Heart right ventricle (tissue), 16 donors: ENCODE measurements at regions of chr1 and their contacts with region 1.

Region 1: DNA sequence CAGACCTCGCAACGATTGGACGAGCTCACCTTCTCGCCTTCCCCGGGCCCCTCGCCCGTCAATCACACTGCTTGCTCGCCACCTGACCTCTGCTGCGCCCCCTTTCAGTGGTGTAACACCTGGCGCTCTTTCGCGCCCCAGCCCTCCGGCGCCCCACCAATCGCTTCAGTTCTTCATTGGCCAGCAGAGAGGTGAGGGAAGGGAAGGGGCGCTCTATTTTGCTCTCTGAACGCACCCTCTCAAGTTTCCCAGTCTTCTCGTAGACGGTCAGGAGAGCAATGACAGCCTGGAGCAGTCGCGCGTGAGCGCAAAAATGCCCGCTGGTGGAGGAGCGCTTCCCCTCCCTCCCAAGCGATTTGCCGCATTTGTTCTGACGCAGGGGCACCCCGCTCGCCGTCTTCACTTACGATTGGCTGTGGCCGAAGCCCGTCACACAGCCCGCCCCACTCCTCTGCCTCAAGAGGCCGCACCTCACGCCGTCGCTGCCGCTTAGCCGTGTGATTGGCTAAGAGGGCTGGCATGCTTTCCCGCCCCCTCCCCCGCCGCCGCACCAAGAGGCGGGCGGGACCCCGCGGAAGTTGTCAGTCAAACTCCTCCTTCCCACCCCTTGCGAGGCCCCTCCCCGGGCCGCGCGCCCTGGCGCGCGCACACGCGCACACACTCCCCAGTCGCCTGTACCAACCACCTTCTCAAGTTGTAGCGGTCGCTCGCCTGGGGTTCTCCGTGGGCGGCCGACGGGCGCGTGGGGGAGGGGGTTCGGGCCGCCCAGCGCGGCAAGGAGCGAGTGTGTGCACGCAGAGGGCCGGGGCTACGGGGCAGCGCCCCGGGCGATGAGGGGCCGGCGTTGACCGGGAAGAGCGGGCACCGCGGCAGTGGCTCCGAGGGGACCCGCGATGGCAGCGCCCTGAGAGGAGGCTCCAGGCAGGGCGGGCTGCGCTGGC is at the start of gene PPP2R5A:
- DNase-seq: peak; percentile 99
- ATAC-seq: peak; percentile 95 to 98 (median 98)
- H3K4me3 ChIP-seq: peak within 1 kb of the TSS; percentile 75 to 95 (median 91)
- H3K27ac ChIP-seq: peak within 1 kb of the TSS; percentile 96 to 99 (median 98)
- H3K4me1 ChIP-seq: peaks cover 0 to 46% (median 32%) of the 10 kb centered on the region in 9 donors
- H3K27me3 ChIP-seq: no peaks in the 10 kb centered on the region
- CTCF ChIP-seq: peak in 7 of 9 donors; percentile 6 to 52 (median 33)
- total RNA-seq, gene PPP2R5A: 48.6 to 86.8 (median 57.3) TPM

Region 2: DNA sequence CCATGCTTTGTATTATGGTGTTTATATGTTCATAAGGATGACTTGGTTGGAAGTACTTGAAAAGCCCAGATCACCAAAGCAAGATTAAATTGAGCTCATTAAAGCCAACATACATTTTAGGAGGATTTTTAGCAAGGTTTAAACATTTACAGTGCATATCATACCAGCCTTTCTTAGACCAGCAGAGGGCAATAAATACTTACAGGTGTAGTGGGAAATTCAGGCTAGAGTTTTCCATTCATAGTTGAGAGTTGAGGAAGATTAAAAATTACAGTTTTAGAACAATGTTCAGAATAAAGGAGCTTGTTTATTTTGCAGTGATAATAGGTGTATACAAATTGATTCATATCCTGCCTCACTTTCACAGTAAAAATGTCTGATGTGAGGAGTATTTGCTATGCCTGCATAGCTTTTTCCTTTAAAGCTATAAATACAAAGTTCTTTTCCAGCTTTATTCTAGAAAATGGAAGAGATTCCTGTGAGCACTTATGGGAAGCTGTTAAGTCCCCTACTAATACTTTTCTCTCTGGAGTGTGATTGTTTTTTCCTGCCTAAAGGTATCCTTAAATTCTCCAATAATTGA is 214.2 kb before region 1 on chr1:
- intact Hi-C with region 1: loop called in 5 of 10 experiments (anchors 2 to 5 kb)
- DNase-seq: no peak
- ATAC-seq: peak; percentile 52 to 83 (median 58)
- H3K4me3 ChIP-seq: no peak overlapping the region
- H3K27ac ChIP-seq: peak overlapping the region in 2 of 10 donors; percentile 0 to 58
- H3K4me1 ChIP-seq: peaks cover 0 to 39% (median 9%) of the 10 kb centered on the region in 9 donors
- H3K27me3 ChIP-seq: no peaks in the 10 kb centered on the region
- CTCF ChIP-seq: peak; percentile 66 to 91 (median 81)

Region 3: DNA sequence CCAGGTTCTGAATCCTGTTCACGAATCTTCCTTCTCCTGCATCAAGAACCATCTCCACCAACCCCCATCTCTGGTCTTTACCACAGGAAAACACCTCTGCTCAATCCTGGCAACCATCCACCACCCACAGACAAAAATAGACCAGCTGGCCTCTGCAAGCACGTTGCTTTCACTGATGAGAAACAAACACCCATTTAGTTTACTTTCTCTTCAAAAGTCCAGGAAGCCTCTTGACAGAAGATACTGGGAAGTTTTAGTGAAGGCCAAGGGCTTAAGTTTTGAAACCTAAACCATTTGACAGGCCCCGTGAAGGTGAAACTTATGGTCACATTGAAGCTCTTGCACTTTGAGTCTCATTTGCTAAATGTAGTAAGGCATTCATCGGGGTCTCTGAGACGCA is 122.4 kb before region 1 on chr1:
- intact Hi-C with region 1: loop called in 3 of 10 experiments (anchors 1 to 10 kb)
- DNase-seq: peak; percentile 31 to 76
- ATAC-seq: peak; percentile 32 to 69 (median 57)
- H3K4me3 ChIP-seq: no peak overlapping the region
- H3K27ac ChIP-seq: peak overlapping the region in 9 of 10 donors; percentile 3 to 81 (median 42)
- H3K4me1 ChIP-seq: peaks cover 5 to 52% (median 39%) of the 10 kb centered on the region in 9 donors
- H3K27me3 ChIP-seq: no peaks in the 10 kb centered on the region
- CTCF ChIP-seq: no peak

Region 4: DNA sequence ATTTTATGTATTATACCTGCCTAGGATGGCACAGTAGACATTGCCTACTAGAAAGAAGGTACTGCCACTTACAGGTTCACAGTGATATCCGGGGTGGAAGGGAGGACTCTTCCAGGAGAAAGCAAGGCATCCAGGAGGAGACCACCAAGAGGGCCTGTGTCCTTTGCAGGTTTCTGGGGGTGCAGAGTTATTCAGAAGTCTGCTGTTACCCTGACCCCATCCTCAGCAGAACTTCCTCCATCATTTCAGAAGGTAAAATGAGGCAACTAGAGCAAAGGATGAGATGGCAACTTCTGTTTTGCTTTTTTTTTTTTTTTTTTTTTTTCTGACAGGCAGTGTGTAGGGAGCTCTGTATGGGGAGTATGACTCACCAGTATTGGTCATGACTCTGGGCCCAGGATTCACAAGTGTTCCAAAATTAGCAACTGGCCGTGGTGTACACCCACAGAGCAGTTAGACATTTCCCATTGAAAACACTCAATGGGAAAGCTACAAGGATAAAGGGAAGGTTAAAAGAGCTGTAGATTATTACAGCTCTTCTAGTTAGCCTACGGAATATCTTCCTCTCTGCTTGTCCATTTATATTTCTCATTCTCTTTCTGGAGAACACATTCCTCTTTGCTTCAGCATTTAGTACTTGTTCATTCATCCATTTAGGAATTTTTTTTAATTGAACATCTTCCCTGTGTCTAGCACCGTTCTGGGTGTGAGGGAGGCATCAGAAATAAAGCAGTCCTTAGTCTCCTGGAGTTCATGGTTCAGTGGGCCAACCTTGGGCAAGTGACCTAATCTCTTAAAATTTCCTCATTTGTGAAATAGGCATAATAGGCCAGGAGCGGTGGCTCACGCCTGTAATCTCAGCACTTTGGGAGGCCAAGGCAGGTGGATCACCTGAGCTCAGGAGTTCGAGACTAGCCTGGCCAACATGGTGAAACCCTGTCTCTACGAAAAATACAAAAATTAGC is 50.3 kb before region 1 on chr1:
- intact Hi-C with region 1: loop called in 6 of 10 experiments (anchors 2 to 10 kb)
- DNase-seq: peak in 1 of 2 donors; percentile 73
- ATAC-seq: peak; percentile 94 to 98 (median 96)
- H3K4me3 ChIP-seq: no peak overlapping the region
- H3K27ac ChIP-seq: peak overlapping the region; percentile 59 to 90 (median 75)
- H3K4me1 ChIP-seq: peaks cover 4 to 55% (median 39%) of the 10 kb centered on the region in 9 donors
- H3K27me3 ChIP-seq: no peaks in the 10 kb centered on the region
- CTCF ChIP-seq: no peak

Region 5: GRCh38 chr1:212346601-212347000 is 61.6 kb after region 1 on chr1:
- intact Hi-C with region 1: no loop called
- DNase-seq: no peak
- ATAC-seq: no peak
- H3K4me3 ChIP-seq: no peak overlapping the region
- H3K27ac ChIP-seq: no peak overlapping the region
- H3K4me1 ChIP-seq: peaks cover 0 to 6% (median 0%) of the 10 kb centered on the region in 9 donors
- H3K27me3 ChIP-seq: no peaks in the 10 kb centered on the region
- CTCF ChIP-seq: no peak

Region 6: DNA sequence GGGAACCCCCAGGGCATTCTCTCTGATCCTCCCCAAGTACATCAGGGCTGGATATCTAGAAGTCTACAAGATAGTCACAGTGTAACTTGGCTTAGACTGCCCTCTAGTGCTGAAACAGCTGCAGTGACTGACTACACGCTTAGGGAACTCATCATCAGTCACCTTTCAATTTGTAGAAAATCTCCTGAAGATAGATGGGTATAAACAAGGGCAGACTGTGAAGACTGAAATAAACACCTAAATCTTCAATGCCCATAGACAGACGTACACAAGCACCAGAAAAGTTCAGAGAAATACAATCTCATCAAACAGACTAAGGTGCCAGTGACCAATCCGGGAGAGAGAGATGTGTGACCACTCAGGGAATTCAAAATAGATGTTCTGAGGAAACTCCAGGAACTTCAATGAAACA is 83.1 kb after region 1 on chr1:
- intact Hi-C with region 1: loop called in 4 of 10 experiments (anchors 5 kb)
- DNase-seq: peak in 1 of 2 donors; percentile 58
- ATAC-seq: peak; percentile 72 to 88 (median 85)
- H3K4me3 ChIP-seq: no peak overlapping the region
- H3K27ac ChIP-seq: no peak overlapping the region
- H3K4me1 ChIP-seq: peaks cover 0 to 30% (median 11%) of the 10 kb centered on the region in 9 donors
- H3K27me3 ChIP-seq: no peaks in the 10 kb centered on the region
- CTCF ChIP-seq: peak; percentile 60 to 90 (median 85)

Region 7: GRCh38 chr1:212477014-212477679 is 192.1 kb after region 1 on chr1:
- intact Hi-C with region 1: no loop called
- DNase-seq: peak; percentile 70 to 86
- ATAC-seq: peak; percentile 91 to 96 (median 94)
- H3K4me3 ChIP-seq: no peak overlapping the region
- H3K27ac ChIP-seq: no peak overlapping the region
- H3K4me1 ChIP-seq: peaks cover 0 to 7% (median 0%) of the 10 kb centered on the region in 9 donors
- H3K27me3 ChIP-seq: peaks cover 0 to 9% (median 0%) of the 10 kb centered on the region in 7 donors
- CTCF ChIP-seq: peak; percentile 80 to 97 (median 92)